Mammary epithelial cell (primary cell): ENCODE measurements at regions of chr4 and their contacts with region 1.

Region 1: GRCh38 chr4:168139336-168139735 is 47.0 kb downstream of the ANXA10 start:
- DNase-seq: peak; percentile 45
- H3K4me3 ChIP-seq: no peak overlapping the region
- H3K27ac ChIP-seq: peak overlapping the region; percentile 1
- H3K4me1 ChIP-seq: peaks cover 16% of the 10 kb centered on the region
- H3K27me3 ChIP-seq: no peaks in the 10 kb centered on the region
- CTCF ChIP-seq: no peak

Region 2: DNA sequence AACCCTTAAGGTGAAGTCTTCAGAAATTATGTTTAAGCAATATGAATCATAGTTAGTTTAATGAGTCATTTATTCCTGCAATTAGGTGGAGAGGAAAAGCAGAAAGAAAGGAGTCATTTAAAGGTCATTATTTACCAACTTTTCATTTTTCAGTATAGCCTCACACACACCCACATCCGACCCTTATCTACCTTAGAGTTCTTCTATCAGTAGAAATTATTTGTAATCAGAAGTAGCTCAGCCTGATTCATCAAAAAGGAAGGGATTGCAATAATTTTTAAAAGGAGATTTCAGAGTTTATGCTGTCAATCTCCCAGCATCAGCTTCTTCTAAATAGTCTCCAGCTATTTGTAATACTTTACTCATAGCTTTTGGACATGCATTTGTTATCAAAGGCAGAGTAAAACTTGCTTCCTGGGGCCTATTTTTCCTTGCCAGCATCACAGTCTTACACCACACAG is 41.0 kb before region 1 on chr4:
- CTCF ChIA-PET with region 1: no interaction called
- dilution Hi-C with region 1: no loop called
- in situ Hi-C with region 1: no loop called
- intact Hi-C with region 1: loop called (anchors 2 kb)
- DNase-seq: peak; percentile 81
- H3K4me3 ChIP-seq: no peak overlapping the region
- H3K27ac ChIP-seq: no peak overlapping the region
- H3K4me1 ChIP-seq: peaks cover 16% of the 10 kb centered on the region
- H3K27me3 ChIP-seq: no peaks in the 10 kb centered on the region
- CTCF ChIP-seq: no peak

Region 3: GRCh38 chr4:168264903-168265302 is 125.6 kb after region 1 on chr4:
- CTCF ChIA-PET with region 1: no interaction called
- dilution Hi-C with region 1: no loop called
- in situ Hi-C with region 1: no loop called
- intact Hi-C with region 1: no loop called
- DNase-seq: no peak
- H3K4me3 ChIP-seq: no peak overlapping the region
- H3K27ac ChIP-seq: no peak overlapping the region
- H3K4me1 ChIP-seq: no peaks in the 10 kb centered on the region
- H3K27me3 ChIP-seq: no peaks in the 10 kb centered on the region
- CTCF ChIP-seq: no peak